ENCODE measurements at regions of chr11 and their contacts with region 1.

Region 1: DNA sequence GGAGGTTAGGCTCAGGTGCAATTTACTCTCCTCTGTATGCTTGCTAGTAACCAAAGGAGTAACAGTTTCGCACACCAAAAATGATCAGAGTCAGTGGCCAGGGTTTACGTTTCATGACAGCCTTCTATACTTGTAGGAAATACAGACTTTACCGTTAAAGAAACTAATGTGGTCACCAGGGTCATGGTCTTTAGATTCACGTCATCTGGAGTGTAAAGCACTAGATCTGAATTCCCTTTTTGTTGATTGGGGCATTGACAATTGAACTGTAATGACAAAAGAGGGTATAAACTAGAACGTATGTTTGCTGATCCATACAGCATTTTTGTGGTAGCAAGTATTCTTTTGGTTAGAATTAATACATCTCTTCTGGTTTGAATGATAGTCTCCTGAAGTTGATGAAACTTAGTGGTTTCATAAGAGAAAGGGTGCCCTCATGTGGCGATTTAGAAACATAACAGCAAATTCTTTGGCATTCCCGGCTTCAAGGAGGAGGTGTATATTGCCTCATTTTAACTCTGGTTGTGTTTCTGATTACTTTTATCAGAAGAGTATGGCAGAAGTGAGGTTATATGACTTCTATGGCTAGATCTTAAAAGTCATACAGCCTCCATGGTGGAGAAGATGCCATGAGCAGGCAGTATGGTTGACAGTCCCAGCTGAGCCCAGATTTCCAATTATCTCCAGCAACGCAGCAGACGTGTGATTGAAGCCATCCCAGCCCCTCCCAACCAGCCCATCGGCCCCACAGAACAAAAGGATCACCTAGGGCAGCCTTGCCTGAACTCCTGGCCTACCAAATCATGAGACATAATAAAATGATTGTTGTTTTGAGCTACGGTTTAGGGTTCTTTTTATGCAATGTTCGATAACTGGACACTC is 35.1 kb downstream of the MMP7 start:
- DNase-seq: peak; percentile 54
- H3K4me3 Mint-ChIP-seq: peak overlapping the region; percentile 18
- H3K27ac Mint-ChIP-seq: peak overlapping the region; percentile 11
- H3K4me1 Mint-ChIP-seq: no peaks in the 10 kb centered on the region
- H3K27me3 Mint-ChIP-seq: no peaks in the 10 kb centered on the region
- CTCF ChIP-seq: peak; percentile 28

Region 2: DNA sequence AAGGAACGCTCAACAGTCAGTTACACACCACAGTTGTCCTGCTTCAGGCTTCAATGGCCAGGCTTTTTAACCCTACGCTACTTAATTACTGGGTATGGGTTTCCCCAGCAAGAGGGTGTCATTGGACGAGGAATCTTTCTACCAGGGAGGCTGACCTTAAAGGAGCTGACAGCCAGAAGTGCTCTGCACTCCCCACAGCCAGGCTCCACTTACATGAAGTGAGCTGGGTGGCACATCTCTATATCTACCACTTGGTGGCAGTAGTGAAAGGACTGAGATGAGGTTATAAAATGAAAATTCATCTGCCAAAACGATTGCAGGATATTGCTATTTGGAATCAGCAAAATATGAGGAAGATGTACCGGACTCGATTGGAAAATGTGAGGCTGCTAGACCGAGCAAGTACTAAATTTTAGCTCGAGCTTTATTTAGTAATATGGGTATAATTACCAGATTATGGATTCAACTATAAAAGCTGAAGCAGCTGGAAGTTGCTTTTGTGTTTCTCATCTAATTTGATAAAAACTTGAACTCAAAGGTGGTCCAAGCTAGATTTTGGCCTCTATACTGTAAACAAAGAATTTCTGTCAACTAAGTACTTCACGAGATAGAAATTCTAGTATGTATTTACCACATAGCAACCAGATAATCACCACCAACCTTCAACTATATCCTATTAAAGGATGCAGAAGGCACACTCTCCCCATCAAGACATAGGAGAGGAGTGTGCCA is 634.5 kb before region 1 on chr11:
- CTCF ChIA-PET with region 1: no interaction called
- intact Hi-C with region 1: loop called (anchors 10 kb)
- DNase-seq: peak; percentile 30
- H3K4me3 Mint-ChIP-seq: no peak overlapping the region
- H3K27ac Mint-ChIP-seq: no peak overlapping the region
- H3K4me1 Mint-ChIP-seq: peaks cover 15% of the 10 kb centered on the region
- H3K27me3 Mint-ChIP-seq: no peaks in the 10 kb centered on the region
- CTCF ChIP-seq: peak; percentile 30

Region 3: GRCh38 chr11:102346748-102347461 is 148.5 kb before region 1 on chr11 and contains the start of gene BIRC2:
- CTCF ChIA-PET with region 1: no interaction called
- intact Hi-C with region 1: loop called (anchors 10 kb)
- DNase-seq: peak; percentile 94
- H3K4me3 Mint-ChIP-seq: peak within 1 kb of the TSS; percentile 77
- H3K27ac Mint-ChIP-seq: peak within 1 kb of the TSS; percentile 90
- H3K4me1 Mint-ChIP-seq: peaks cover 14% of the 10 kb centered on the region
- H3K27me3 Mint-ChIP-seq: no peaks in the 10 kb centered on the region
- CTCF ChIP-seq: no peak
- total RNA-seq, gene BIRC2: 28.3 and 32.6 TPM in 2 replicates

Region 4: DNA sequence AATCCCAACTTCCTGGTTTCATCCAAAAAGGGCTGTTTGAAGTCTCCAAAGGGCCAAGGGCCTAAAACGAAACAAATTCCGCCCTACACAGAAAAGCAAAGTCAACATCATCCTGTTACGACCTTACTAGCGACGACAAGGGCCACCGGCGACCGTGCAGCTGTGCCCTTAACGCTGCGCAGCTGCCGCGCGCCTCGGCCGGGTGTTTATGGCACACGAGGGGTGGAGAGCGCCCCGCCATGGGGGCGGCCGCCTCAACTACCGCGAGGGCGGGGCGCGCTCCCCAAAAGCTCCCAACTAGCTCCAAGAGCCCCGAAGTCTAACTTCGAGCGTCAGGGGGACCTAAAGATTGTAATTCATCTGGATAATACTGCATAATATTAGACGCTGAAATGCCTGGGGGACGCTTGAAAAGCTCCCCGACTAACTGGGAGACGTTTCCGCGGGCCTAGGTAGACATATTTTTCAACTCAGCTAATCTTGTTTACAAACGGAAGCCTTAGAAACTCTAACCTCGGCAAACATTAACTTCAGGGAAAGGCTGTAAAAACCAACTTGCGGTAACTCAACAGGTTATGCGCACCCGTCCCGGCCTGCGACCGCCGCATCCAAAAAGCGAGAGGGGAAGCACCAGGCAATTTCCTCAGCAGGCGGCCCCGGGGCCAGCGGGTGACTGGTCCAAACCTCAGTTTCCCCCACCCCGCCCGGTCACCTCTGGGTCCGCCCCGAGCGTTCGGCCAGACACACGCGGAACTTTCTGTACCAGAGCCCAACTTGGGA is 43.5 kb before region 1 on chr11:
- CTCF ChIA-PET with region 1: interaction called, 3 read pairs
- intact Hi-C with region 1: loop called (anchors 2 kb)
- DNase-seq: peak; percentile 49
- H3K4me3 Mint-ChIP-seq: peak overlapping the region; percentile 96
- H3K27ac Mint-ChIP-seq: peak overlapping the region; percentile 69
- H3K4me1 Mint-ChIP-seq: peaks cover 39% of the 10 kb centered on the region
- H3K27me3 Mint-ChIP-seq: no peaks in the 10 kb centered on the region
- CTCF ChIP-seq: no peak

Region 5: GRCh38 chr11:102666331-102666957 is 171.0 kb after region 1 on chr11:
- CTCF ChIA-PET with region 1: interaction called, 5 read pairs
- intact Hi-C with region 1: loop called (anchors 5 kb)
- DNase-seq: peak; percentile 28
- H3K4me3 Mint-ChIP-seq: no peak overlapping the region
- H3K27ac Mint-ChIP-seq: no peak overlapping the region
- H3K4me1 Mint-ChIP-seq: no peaks in the 10 kb centered on the region
- H3K27me3 Mint-ChIP-seq: no peaks in the 10 kb centered on the region
- CTCF ChIP-seq: peak; percentile 57

Region 6: GRCh38 chr11:102733232-102733875 is 238.0 kb after region 1 on chr11:
- CTCF ChIA-PET with region 1: no interaction called
- intact Hi-C with region 1: no loop called
- DNase-seq: peak; percentile 74
- H3K4me3 Mint-ChIP-seq: no peak overlapping the region
- H3K27ac Mint-ChIP-seq: no peak overlapping the region
- H3K4me1 Mint-ChIP-seq: no peaks in the 10 kb centered on the region
- H3K27me3 Mint-ChIP-seq: no peaks in the 10 kb centered on the region
- CTCF ChIP-seq: peak; percentile 64